ENCODE measurements at regions of chrX and their contacts with region 1.

Region 1: GRCh38 chrX:118847676-118848075 is 24.1 kb downstream of the ZCCHC12 start:
- DNase-seq: no peak
- H3K4me3 ChIP-seq: no peak overlapping the region
- H3K27ac ChIP-seq: no peak overlapping the region
- H3K4me1 ChIP-seq: peaks cover 3 to 6% of the 10 kb centered on the region in 2 donors
- H3K27me3 ChIP-seq: no peaks in the 10 kb centered on the region
- CTCF ChIP-seq: peak in 4 of 6 experiments; percentile 45 to 82 (median 60)
- POLR2A ChIP-seq: no peak

Region 2: DNA sequence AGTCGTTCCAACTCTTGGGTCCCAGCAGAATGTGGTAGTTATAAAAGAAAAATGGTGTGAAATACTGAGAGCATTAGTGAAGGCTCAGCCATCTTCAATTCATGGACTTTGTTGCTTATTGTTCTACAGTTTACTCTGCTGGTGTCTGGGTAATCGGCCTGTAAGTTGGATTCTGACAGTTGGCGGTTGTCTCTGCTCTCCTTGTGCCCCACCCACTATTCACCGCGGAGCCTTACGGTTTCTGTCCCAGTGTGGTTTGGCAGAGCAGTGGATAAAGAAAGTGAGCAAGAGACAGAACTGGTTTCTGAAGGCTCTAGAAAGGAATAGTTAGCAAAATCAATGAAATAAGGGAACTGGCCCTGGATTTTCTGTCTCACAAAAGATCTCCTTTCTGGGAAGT is 135.8 kb after region 1 on chrX:
- intact Hi-C with region 1: loop called (anchors 10 kb)
- DNase-seq: no peak
- H3K4me3 ChIP-seq: no peak overlapping the region
- H3K27ac ChIP-seq: peak overlapping the region in 1 of 3 donors; percentile 23
- H3K4me1 ChIP-seq: peaks cover 6 to 18% of the 10 kb centered on the region in 2 donors
- H3K27me3 ChIP-seq: no peaks in the 10 kb centered on the region
- CTCF ChIP-seq: no peak
- POLR2A ChIP-seq: no peak

Region 3: DNA sequence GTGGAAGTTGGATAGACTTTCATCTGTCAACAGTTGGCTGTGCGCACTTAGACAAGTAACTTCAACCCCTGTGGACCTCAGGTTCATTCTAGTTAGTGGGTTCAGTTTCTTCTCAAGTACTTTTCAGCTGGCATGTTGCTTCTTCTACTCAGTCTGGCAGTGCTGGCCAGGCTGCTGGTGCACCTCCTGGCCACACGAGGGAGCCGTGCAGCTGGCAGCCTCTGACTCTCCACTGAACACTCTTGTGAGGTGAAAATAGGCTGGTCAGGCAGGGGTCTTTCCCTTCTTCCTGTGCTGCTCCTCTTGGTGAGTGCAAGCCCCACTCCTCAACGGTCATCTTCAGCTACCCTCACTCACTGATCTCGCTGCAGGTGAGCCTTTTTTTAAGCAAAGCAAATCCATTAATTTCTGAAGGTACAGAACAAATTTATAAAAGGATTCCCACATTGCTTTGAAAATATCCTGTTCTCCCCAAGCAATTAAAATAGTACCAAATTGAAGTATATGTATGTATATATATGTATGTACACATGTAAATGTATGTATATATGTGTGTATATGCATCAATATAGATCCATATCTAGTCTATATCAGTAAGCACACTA is 157.3 kb after region 1 on chrX:
- intact Hi-C with region 1: loop called (anchors 5 kb)
- DNase-seq: peak; percentile 60 to 65
- H3K4me3 ChIP-seq: no peak overlapping the region
- H3K27ac ChIP-seq: no peak overlapping the region
- H3K4me1 ChIP-seq: peaks cover 0 to 3% of the 10 kb centered on the region in 2 donors
- H3K27me3 ChIP-seq: no peaks in the 10 kb centered on the region
- CTCF ChIP-seq: peak; percentile 43 to 82 (median 79)
- POLR2A ChIP-seq: no peak

Region 4: GRCh38 chrX:119067023-119067739 is 219.5 kb after region 1 on chrX:
- intact Hi-C with region 1: loop called (anchors 5 kb)
- DNase-seq: peak; percentile 62 to 66
- H3K4me3 ChIP-seq: no peak overlapping the region
- H3K27ac ChIP-seq: no peak overlapping the region
- H3K4me1 ChIP-seq: no peaks in the 10 kb centered on the region
- H3K27me3 ChIP-seq: no peaks in the 10 kb centered on the region
- CTCF ChIP-seq: peak; percentile 20 to 66 (median 52)
- POLR2A ChIP-seq: no peak

Measured in thyroid gland (tissue), 4 donors.